GM12878 (cell line): ENCODE measurements at regions of chr2 and their contacts with region 1.

Region 1: GRCh38 chr2:214737188-214737587 is 72.3 kb downstream of the BARD1 start:
- DNase-seq: peak; percentile 92
- ATAC-seq: peak; percentile 88
- H3K4me3 ChIP-seq: no peak overlapping the region
- H3K27ac ChIP-seq: peak overlapping the region; percentile 89
- H3K4me1 ChIP-seq: peaks cover 12% of the 10 kb centered on the region
- H3K27me3 ChIP-seq: no peaks in the 10 kb centered on the region
- CTCF ChIP-seq: no peak
- EP300 ChIP-seq: peak; percentile 97 to 98; a peak in 3 of 4 replicates
- POLR2A ChIP-seq: no peak
- RAD21 ChIP-seq: no peak

Region 2: GRCh38 chr2:214310319-214310718 is 426.9 kb before region 1 on chr2:
- CTCF ChIA-PET with region 1: no interaction called
- POLR2A ChIA-PET with region 1: no interaction called
- RAD21 ChIA-PET with region 1: no interaction called
- SMC1A ChIA-PET with region 1: interaction called, 3 read pairs
- in situ Hi-C with region 1: no loop called
- intact Hi-C with region 1: loop called (anchors 10 kb)
- DNase-seq: no peak
- ATAC-seq: peak; percentile 75
- H3K4me3 ChIP-seq: no peak overlapping the region
- H3K27ac ChIP-seq: no peak overlapping the region
- H3K4me1 ChIP-seq: no peaks in the 10 kb centered on the region; the same call in 1 of the 2 replicates
- H3K27me3 ChIP-seq: no peaks in the 10 kb centered on the region
- CTCF ChIP-seq: peak; percentile 33 to 45 (median 35); a peak in 5 of 6 replicates
- EP300 ChIP-seq: no peak
- POLR2A ChIP-seq: no peak
- RAD21 ChIP-seq: peak; percentile 52

Region 3: DNA sequence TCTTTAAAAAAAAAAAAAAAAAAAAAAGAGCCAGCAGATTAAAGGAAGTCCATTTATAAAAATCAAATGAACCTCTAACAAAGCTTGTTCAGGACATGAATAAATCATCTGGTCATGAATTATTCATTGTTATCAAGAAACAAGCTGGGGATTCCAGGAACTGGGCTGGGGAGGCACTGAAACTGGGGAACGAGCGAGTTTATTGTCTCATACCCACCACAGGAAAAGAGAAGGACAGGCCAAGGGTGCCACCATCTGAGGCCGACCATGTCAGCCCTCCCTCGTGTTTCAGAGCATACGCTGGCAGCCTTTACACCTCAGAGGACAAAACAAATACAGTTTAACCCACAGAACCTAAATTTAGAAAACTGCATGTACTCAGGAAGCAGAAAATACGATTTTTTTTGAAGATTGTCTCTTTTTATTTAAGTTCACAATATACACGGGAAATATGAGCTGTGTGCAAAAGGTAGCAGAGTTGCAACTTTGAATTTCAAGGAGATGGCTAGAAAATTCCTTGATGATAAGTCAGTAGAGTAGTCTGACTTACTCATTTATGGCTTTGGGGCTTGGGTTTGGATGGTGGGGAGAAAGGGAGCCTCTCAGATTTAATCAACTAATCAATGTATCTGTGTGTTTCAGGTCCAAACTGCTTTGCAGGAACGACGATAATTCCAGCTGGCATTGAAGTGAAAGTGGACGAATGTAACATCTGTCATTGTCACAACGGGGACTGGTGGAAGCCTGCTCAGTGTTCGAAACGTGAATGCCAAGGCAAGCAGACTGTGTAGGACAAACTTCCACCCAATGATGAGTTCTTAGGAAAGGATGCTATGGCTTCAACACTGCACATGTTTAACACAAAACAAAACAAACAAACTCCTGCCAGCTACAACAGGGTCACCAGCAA is 161.9 kb before region 1 on chr2:
- CTCF ChIA-PET with region 1: no interaction called
- POLR2A ChIA-PET with region 1: no interaction called
- RAD21 ChIA-PET with region 1: no interaction called
- SMC1A ChIA-PET with region 1: no interaction called
- in situ Hi-C with region 1: no loop called
- intact Hi-C with region 1: no loop called
- DNase-seq: no peak
- ATAC-seq: peak; percentile 70
- H3K4me3 ChIP-seq: no peak overlapping the region
- H3K27ac ChIP-seq: no peak overlapping the region
- H3K4me1 ChIP-seq: no peaks in the 10 kb centered on the region
- H3K27me3 ChIP-seq: no peaks in the 10 kb centered on the region
- CTCF ChIP-seq: no peak; a peak in 1 of 6 replicates
- EP300 ChIP-seq: no peak
- POLR2A ChIP-seq: no peak
- RAD21 ChIP-seq: no peak

Region 4: GRCh38 chr2:214747992-214748391 is 10.8 kb after region 1 on chr2:
- CTCF ChIA-PET with region 1: interaction called, 9 read pairs
- POLR2A ChIA-PET with region 1: interaction called, 11 read pairs
- RAD21 ChIA-PET with region 1: interaction called, 8 read pairs
- SMC1A ChIA-PET with region 1: interaction called, 15 read pairs
- in situ Hi-C with region 1: no loop called
- intact Hi-C with region 1: loop called (anchors 2 kb)
- DNase-seq: peak; percentile 40
- ATAC-seq: peak; percentile 78
- H3K4me3 ChIP-seq: no peak overlapping the region
- H3K27ac ChIP-seq: no peak overlapping the region
- H3K4me1 ChIP-seq: no peaks in the 10 kb centered on the region
- H3K27me3 ChIP-seq: no peaks in the 10 kb centered on the region
- CTCF ChIP-seq: no peak
- EP300 ChIP-seq: peak in 1 of 2 experiments; percentile 47; a peak in 1 of 4 replicates
- POLR2A ChIP-seq: no peak
- RAD21 ChIP-seq: no peak

Region 5: DNA sequence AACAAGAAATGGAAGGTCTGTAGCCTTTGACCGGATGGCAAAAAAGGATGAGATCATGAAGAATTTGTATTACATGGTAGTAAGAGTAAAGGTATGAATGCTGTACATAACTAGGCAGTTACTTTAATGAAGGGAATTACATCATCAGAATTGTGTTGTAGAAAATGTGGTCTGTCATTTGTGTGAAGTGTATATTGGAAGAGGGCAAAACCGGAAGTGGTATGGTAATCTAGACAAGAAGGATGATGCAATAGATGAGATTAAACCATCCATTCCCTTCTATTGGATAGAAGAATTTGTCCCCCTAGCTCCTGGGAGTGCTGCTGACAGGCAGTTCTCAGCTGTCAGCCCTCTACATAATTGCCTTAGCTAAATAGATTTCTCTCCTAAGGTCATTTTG is 128.2 kb after region 1 on chr2:
- CTCF ChIA-PET with region 1: no interaction called
- POLR2A ChIA-PET with region 1: no interaction called
- RAD21 ChIA-PET with region 1: no interaction called
- SMC1A ChIA-PET with region 1: no interaction called
- in situ Hi-C with region 1: no loop called
- intact Hi-C with region 1: no loop called
- DNase-seq: no peak
- ATAC-seq: no peak
- H3K4me3 ChIP-seq: no peak overlapping the region
- H3K27ac ChIP-seq: no peak overlapping the region
- H3K4me1 ChIP-seq: no peaks in the 10 kb centered on the region
- H3K27me3 ChIP-seq: no peaks in the 10 kb centered on the region
- CTCF ChIP-seq: no peak
- EP300 ChIP-seq: no peak
- POLR2A ChIP-seq: no peak
- RAD21 ChIP-seq: no peak

Region 6: DNA sequence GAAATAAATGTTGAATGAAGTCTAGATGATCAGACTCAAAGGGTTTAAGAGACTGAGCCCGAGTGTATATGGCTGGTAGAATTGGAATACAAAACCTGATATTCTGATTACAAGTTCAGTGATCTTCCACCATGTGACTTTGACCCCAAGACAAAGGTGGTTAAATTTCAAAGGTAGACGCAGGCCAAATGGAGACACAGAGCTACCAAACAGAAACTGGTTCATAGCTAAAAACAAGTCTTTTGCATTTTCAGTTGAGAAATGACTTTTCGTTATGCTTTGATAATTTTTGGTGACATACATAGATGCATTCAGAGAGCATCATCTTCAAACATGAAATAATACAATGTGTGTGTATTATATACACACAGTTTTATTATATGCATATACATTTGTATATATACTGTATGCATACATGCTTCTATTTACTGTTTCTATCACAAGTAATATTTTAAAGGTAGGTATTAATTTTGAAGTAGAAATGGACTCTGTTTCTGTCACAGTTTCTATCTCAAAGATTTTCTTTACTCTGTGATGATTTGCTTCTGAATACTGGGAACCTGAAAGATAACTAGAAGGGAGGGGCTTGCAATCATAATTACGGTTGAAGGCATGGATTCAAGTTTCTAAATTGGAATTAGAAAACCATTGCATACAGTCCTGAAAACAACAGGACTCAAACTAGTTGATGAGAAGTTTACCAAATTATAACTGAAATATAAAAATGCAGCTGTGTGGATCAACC is 258.9 kb after region 1 on chr2:
- CTCF ChIA-PET with region 1: no interaction called
- POLR2A ChIA-PET with region 1: no interaction called
- RAD21 ChIA-PET with region 1: interaction called, 4 read pairs
- SMC1A ChIA-PET with region 1: interaction called, 6 read pairs
- in situ Hi-C with region 1: loop called (anchors 5 kb)
- intact Hi-C with region 1: loop called (anchors 10 kb)
- DNase-seq: peak; percentile 85
- ATAC-seq: peak; percentile 96
- H3K4me3 ChIP-seq: 0 out of 2 replicates have a peak overlapping the region, but pooled peaks have one; percentile 21
- H3K27ac ChIP-seq: peak overlapping the region; percentile 89
- H3K4me1 ChIP-seq: peaks cover 20% of the 10 kb centered on the region
- H3K27me3 ChIP-seq: no peaks in the 10 kb centered on the region
- CTCF ChIP-seq: no peak
- EP300 ChIP-seq: peak; percentile 70 to 82; a peak in 2 of 4 replicates
- POLR2A ChIP-seq: no peak
- RAD21 ChIP-seq: no peak

Region 7: GRCh38 chr2:215136669-215137328 is 399.6 kb after region 1 on chr2:
- CTCF ChIA-PET with region 1: no interaction called
- POLR2A ChIA-PET with region 1: no interaction called
- RAD21 ChIA-PET with region 1: no interaction called
- SMC1A ChIA-PET with region 1: no interaction called
- in situ Hi-C with region 1: no loop called
- intact Hi-C with region 1: loop called (anchors 5 kb)
- DNase-seq: peak; percentile 72
- ATAC-seq: peak; percentile 85
- H3K4me3 ChIP-seq: 0 out of 2 replicates have a peak overlapping the region, but pooled peaks have one; percentile 9
- H3K27ac ChIP-seq: peak overlapping the region; percentile 85
- H3K4me1 ChIP-seq: peaks cover 16% of the 10 kb centered on the region
- H3K27me3 ChIP-seq: no peaks in the 10 kb centered on the region
- CTCF ChIP-seq: no peak
- EP300 ChIP-seq: no peak
- POLR2A ChIP-seq: no peak
- RAD21 ChIP-seq: no peak

Region 8: DNA sequence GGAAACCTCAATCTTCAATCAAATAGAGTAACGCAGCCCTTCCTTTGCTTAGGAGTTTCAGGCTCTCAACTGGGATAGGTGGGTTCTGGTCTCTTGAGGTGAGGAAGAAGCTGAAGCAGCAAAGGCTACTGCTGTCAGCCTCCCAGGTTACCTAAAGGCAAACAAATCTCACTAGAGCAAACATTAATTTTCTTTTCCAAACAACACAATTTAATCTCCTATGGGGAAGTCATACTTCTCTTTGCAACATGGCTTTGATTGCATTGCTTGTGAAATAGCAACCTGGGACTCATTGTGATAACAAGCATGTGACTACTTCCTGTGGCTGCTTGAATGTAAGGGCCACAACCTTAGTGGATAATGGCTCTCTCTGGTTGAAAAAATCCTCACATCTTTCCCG is 477.2 kb after region 1 on chr2:
- CTCF ChIA-PET with region 1: no interaction called
- POLR2A ChIA-PET with region 1: no interaction called
- RAD21 ChIA-PET with region 1: no interaction called
- SMC1A ChIA-PET with region 1: no interaction called
- in situ Hi-C with region 1: no loop called
- intact Hi-C with region 1: no loop called
- DNase-seq: no peak
- ATAC-seq: no peak
- H3K4me3 ChIP-seq: no peak overlapping the region
- H3K27ac ChIP-seq: no peak overlapping the region
- H3K4me1 ChIP-seq: no peaks in the 10 kb centered on the region
- H3K27me3 ChIP-seq: no peaks in the 10 kb centered on the region
- CTCF ChIP-seq: no peak
- EP300 ChIP-seq: no peak
- POLR2A ChIP-seq: no peak
- RAD21 ChIP-seq: no peak